ENCODE measurements at regions of chr7 and their contacts with region 1.

Region 1: DNA sequence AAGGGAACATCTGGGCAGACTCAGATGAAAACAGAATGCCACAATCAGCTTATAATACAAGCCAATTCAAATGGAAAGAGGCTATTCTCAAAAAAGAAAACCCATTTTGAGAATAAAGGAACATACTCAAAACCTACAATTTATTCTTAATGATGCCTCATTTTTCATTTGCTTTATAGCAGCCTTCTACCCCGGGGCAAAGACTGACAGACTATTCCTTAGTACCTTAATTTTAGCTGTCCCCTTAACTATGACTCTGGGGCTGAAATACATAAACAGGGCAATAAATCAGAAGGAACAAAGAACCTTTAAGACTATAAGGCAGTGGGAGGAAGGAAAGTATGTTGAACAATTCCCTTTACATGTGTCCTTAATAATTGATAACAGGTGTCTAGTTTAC is 76.8 kb downstream of the TMEM106B start:
- DNase-seq: no peak
- ATAC-seq: no peak
- H3K4me3 ChIP-seq: no peak overlapping the region
- H3K27ac ChIP-seq: no peak overlapping the region
- H3K4me1 ChIP-seq: no peaks in the 10 kb centered on the region
- H3K27me3 ChIP-seq: no peaks in the 10 kb centered on the region
- CTCF ChIP-seq: no peak
- EP300 ChIP-seq: no peak
- POLR2A ChIP-seq: no peak
- RAD21 ChIP-seq: no peak

Region 2: GRCh38 chr7:12146813-12147212 is 141.1 kb before region 1 on chr7:
- CTCF ChIA-PET with region 1: no interaction called
- POLR2A ChIA-PET with region 1: no interaction called
- RAD21 ChIA-PET with region 1: no interaction called
- SMC1A ChIA-PET with region 1: no interaction called
- in situ Hi-C with region 1: no loop called
- intact Hi-C with region 1: loop called (anchors 5 kb)
- DNase-seq: no peak
- ATAC-seq: no peak
- H3K4me3 ChIP-seq: no peak overlapping the region
- H3K27ac ChIP-seq: no peak overlapping the region
- H3K4me1 ChIP-seq: no peaks in the 10 kb centered on the region
- H3K27me3 ChIP-seq: no peaks in the 10 kb centered on the region
- CTCF ChIP-seq: no peak
- EP300 ChIP-seq: no peak
- POLR2A ChIP-seq: no peak
- RAD21 ChIP-seq: no peak

Measured in GM12878 (cell line).